Sigmoid colon (tissue), 7 donors: ENCODE measurements at regions of chr2 and their contacts with region 1.

Region 1: GRCh38 chr2:134118279-134119116 is 135.4 kb upstream of the MGAT5 start:
- DNase-seq: peak; percentile 93
- H3K4me3 ChIP-seq: no peak overlapping the region
- H3K27ac ChIP-seq: peak overlapping the region; percentile 91 to 96 (median 94)
- H3K4me1 ChIP-seq: peaks cover 0 to 25% (median 18%) of the 10 kb centered on the region in 4 donors
- H3K27me3 ChIP-seq: no peaks in the 10 kb centered on the region
- CTCF ChIP-seq: peak; percentile 59 to 77 (median 72)
- EP300 ChIP-seq: no peak
- POLR2A ChIP-seq: no peak

Region 2: GRCh38 chr2:134207564-134208209 is 89.2 kb after region 1 on chr2:
- intact Hi-C with region 1: loop called (anchors 10 kb)
- DNase-seq: no peak
- H3K4me3 ChIP-seq: no peak overlapping the region
- H3K27ac ChIP-seq: no peak overlapping the region
- H3K4me1 ChIP-seq: peaks cover 0 to 17% (median 7%) of the 10 kb centered on the region in 4 donors
- H3K27me3 ChIP-seq: no peaks in the 10 kb centered on the region
- CTCF ChIP-seq: peak in 2 of 4 experiments; percentile 31
- EP300 ChIP-seq: no peak
- POLR2A ChIP-seq: no peak

Region 3: GRCh38 chr2:134245340-134245984 is 127.0 kb after region 1 on chr2:
- intact Hi-C with region 1: loop called (anchors 1 kb)
- DNase-seq: peak; percentile 82
- H3K4me3 ChIP-seq: no peak overlapping the region
- H3K27ac ChIP-seq: no peak overlapping the region
- H3K4me1 ChIP-seq: peaks cover 0 to 21% (median 9%) of the 10 kb centered on the region in 4 donors
- H3K27me3 ChIP-seq: no peaks in the 10 kb centered on the region
- CTCF ChIP-seq: peak; percentile 46 to 71 (median 58)
- EP300 ChIP-seq: no peak
- POLR2A ChIP-seq: no peak

Region 4: GRCh38 chr2:134336352-134336751 is 217.9 kb after region 1 on chr2:
- intact Hi-C with region 1: no loop called
- DNase-seq: no peak
- H3K4me3 ChIP-seq: no peak overlapping the region
- H3K27ac ChIP-seq: no peak overlapping the region
- H3K4me1 ChIP-seq: no peaks in the 10 kb centered on the region
- H3K27me3 ChIP-seq: no peaks in the 10 kb centered on the region
- CTCF ChIP-seq: no peak
- EP300 ChIP-seq: no peak
- POLR2A ChIP-seq: no peak

Region 5: DNA sequence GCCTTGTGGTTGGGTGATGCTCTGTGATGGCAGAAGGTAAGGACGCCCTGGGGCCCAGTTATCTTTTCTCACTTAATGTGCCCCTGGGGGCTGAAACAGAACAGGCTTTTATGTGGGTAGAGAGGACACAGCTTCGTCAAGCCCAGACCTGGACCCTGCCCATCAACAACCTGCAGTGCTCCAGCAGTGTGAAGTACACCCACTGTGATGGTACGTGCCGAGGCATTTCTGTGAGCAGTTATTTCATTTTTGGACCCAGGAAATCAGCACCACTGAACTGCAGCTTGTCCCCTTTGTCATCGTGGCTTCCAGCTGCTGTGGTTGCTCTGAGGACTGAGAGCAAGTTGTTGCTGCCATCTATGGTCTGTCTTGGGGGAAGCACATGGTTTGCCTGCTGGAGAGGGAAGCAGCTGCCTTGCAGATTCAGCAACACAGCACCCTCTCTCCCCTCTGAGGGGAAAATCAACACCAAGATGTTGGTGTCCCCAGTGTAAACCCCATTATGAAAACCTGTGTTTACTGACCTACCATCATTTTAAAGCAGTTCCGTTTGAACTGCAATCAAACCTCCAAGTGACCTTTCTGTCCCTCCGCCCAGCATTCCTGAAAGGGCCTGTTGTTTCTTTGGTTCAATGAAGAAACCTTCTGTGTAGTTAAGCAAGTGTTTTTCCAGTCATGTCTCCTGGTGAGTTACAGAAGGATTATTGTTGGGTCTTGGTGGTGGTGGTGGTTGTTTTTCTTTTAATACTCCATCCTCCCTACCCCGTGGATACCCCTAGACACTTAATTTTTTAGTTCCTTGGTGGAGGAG is 293.5 kb after region 1 on chr2:
- intact Hi-C with region 1: loop called (anchors 1 kb)
- DNase-seq: peak; percentile 85
- H3K4me3 ChIP-seq: no peak overlapping the region
- H3K27ac ChIP-seq: peak overlapping the region in 2 of 4 donors; percentile 5 to 30
- H3K4me1 ChIP-seq: peaks cover 0 to 28% (median 11%) of the 10 kb centered on the region in 4 donors
- H3K27me3 ChIP-seq: no peaks in the 10 kb centered on the region
- CTCF ChIP-seq: peak; percentile 30 to 67 (median 60)
- EP300 ChIP-seq: no peak
- POLR2A ChIP-seq: no peak

Region 6: GRCh38 chr2:134897932-134898331 is 779.4 kb after region 1 on chr2:
- intact Hi-C with region 1: loop called (anchors 5 kb)
- DNase-seq: no peak
- H3K4me3 ChIP-seq: no peak overlapping the region
- H3K27ac ChIP-seq: no peak overlapping the region
- H3K4me1 ChIP-seq: no peaks in the 10 kb centered on the region
- H3K27me3 ChIP-seq: no peaks in the 10 kb centered on the region
- CTCF ChIP-seq: peak in 1 of 4 experiments; percentile 14
- EP300 ChIP-seq: no peak
- POLR2A ChIP-seq: no peak

Region 7: GRCh38 chr2:135531231-135532228 is 1413.0 kb after region 1 on chr2 and contains the start of gene R3HDM1:
- intact Hi-C with region 1: loop called (anchors 10 kb)
- DNase-seq: peak; percentile 100
- H3K4me3 ChIP-seq: peak within 1 kb of the TSS; percentile 64 to 98 (median 88)
- H3K27ac ChIP-seq: peak within 1 kb of the TSS; percentile 90 to 93 (median 92)
- H3K4me1 ChIP-seq: peaks cover 0 to 25% (median 6%) of the 10 kb centered on the region in 4 donors
- H3K27me3 ChIP-seq: no peaks in the 10 kb centered on the region
- CTCF ChIP-seq: peak in 1 of 4 experiments; percentile 2
- EP300 ChIP-seq: no peak
- POLR2A ChIP-seq: peak in 1 of 2 donors; percentile 6
- total RNA-seq, gene R3HDM1: 12.0 to 34.6 (median 15.8) TPM